Adrenal gland (tissue), 19 donors: ENCODE measurements at regions of chr2 and their contacts with region 1.

Region 1: DNA sequence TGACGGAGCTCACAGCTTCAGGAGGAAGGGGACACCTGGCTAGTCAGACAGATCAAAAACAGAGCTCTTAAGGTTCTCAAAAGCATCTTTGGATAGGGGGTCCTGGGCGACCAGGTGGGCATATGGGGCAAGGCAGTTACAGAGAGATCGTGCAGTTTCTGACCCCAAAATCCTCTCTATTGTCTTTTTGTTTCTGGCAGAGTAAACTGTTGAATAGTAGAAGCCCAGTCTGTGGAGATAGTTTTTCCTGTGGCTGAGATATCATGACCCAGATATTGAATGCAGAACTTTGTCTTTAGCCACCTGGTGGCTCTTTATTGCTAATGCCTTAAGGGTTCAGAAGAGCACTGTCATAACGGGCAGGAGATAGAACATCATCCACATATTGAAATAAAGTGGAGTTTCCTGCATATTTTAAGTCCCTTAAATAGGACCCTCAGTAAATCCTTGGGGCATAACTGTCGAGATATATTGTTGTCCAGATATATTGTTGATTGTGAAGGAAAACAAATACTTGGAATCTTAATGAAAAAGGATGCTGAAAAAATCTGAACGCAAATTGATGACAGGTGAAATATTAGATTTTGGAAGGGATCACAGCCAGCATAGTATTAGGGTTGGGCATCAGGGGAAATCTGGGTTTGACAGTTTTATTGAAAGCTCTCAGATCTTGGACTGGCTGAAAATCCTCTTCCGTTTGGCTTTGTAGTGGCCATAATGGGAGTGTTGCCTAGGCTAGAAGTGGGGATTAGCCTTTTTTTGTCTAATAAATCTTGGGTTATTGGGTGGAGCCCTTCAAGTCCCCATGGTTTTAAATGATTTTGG is 14.1 kb upstream of the ZDBF2 start:
- DNase-seq: peak in 1 of 7 donors; percentile 47
- H3K4me3 ChIP-seq: no peak overlapping the region
- H3K27ac ChIP-seq: no peak overlapping the region
- H3K4me1 ChIP-seq: no peaks in the 10 kb centered on the region
- H3K27me3 ChIP-seq: peaks cover 86% of the 10 kb centered on the region
- CTCF ChIP-seq: peak; percentile 44 to 74 (median 68)
- POLR2A ChIP-seq: no peak

Region 2: GRCh38 chr2:206159346-206160124 is 100.9 kb before region 1 on chr2 and contains the starts of genes EEF1B2 and NDUFS1:
- intact Hi-C with region 1: loop called in 1 of 2 experiments (anchors 10 kb)
- DNase-seq: peak; percentile 97 to 99 (median 98)
- H3K4me3 ChIP-seq: peak within 1 kb of the TSS; percentile 56 to 91 (median 60)
- H3K27ac ChIP-seq: peak within 1 kb of the TSS; percentile 89 to 96 (median 94)
- H3K4me1 ChIP-seq: peaks cover 19 to 47% of the 10 kb centered on the region in 2 donors
- H3K27me3 ChIP-seq: no peaks in the 10 kb centered on the region
- CTCF ChIP-seq: no peak
- POLR2A ChIP-seq: peak in 1 of 2 donors; percentile 75
- total RNA-seq, gene EEF1B2: 351 to 663 (median 430) TPM
- total RNA-seq, gene NDUFS1: 128 to 241 (median 196) TPM

Region 3: DNA sequence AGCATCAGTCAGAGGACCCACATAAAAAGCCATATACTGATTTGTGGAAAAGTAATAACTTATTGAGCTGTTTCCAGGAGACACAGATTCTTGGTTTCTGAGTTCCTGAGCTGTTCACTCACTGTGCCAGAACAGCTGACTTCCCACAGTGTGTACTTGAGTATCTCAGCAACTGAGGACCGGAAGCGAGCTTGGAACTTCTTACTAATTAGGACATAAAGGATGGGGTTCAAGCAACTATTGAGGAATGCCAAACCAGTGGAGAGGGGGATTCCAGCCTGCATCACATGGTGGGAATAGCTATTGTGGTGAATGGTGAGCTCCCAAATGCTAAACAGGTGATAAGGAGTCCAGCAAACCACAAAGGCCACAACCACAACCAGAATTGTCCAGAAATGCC is 84.3 kb before region 1 on chr2:
- intact Hi-C with region 1: loop called in 1 of 2 experiments (anchors 5 kb)
- DNase-seq: no peak
- H3K4me3 ChIP-seq: no peak overlapping the region
- H3K27ac ChIP-seq: peak overlapping the region in 1 of 5 donors; percentile 58
- H3K4me1 ChIP-seq: no peaks in the 10 kb centered on the region
- H3K27me3 ChIP-seq: no peaks in the 10 kb centered on the region
- CTCF ChIP-seq: no peak
- POLR2A ChIP-seq: no peak